ENCODE measurements at regions of chr2 and their contacts with region 1.

Region 1: GRCh38 chr2:172588931-172589330 is 33.0 kb downstream of the PDK1 start:
- DNase-seq: no peak
- ATAC-seq: no peak
- H3K4me3 ChIP-seq: no peak overlapping the region
- H3K4me3 Mint-ChIP-seq: peak overlapping the region in 1 of 10 donors; percentile 2
- H3K27ac ChIP-seq: peak overlapping the region; percentile 7
- H3K27ac Mint-ChIP-seq: peak overlapping the region in 7 of 9 donors; percentile 7 to 76 (median 48)
- H3K4me1 ChIP-seq: peaks cover 5 to 9% of the 10 kb centered on the region in 2 donors
- H3K4me1 Mint-ChIP-seq: peaks cover 27 to 66% (median 57%) of the 10 kb centered on the region in 7 donors
- H3K27me3 ChIP-seq: no peaks in the 10 kb centered on the region
- H3K27me3 Mint-ChIP-seq: no peaks in the 10 kb centered on the region

Region 2: GRCh38 chr2:171297951-171298350 is 1291.0 kb before region 1 on chr2:
- CTCF ChIA-PET with region 1: no interaction called
- POLR2A ChIA-PET with region 1: no interaction called
- intact Hi-C with region 1: no loop called
- DNase-seq: no peak
- ATAC-seq: no peak
- H3K4me3 ChIP-seq: no peak overlapping the region
- H3K4me3 Mint-ChIP-seq: no peak overlapping the region
- H3K27ac ChIP-seq: no peak overlapping the region
- H3K27ac Mint-ChIP-seq: no peak overlapping the region
- H3K4me1 ChIP-seq: no peaks in the 10 kb centered on the region
- H3K4me1 Mint-ChIP-seq: no peaks in the 10 kb centered on the region
- H3K27me3 ChIP-seq: no peaks in the 10 kb centered on the region
- H3K27me3 Mint-ChIP-seq: no peaks in the 10 kb centered on the region

Region 3: GRCh38 chr2:172513935-172514586 is 74.9 kb before region 1 on chr2:
- CTCF ChIA-PET with region 1: no interaction called
- POLR2A ChIA-PET with region 1: no interaction called
- intact Hi-C with region 1: no loop called
- DNase-seq: no peak
- ATAC-seq: peak; percentile 74
- H3K4me3 ChIP-seq: no peak overlapping the region
- H3K4me3 Mint-ChIP-seq: no peak overlapping the region
- H3K27ac ChIP-seq: no peak overlapping the region
- H3K27ac Mint-ChIP-seq: peak overlapping the region in 2 of 9 donors; percentile 22 to 67
- H3K4me1 ChIP-seq: peaks cover 0 to 15% of the 10 kb centered on the region in 2 donors
- H3K4me1 Mint-ChIP-seq: peaks cover 11 to 47% (median 26%) of the 10 kb centered on the region in 7 donors
- H3K27me3 ChIP-seq: no peaks in the 10 kb centered on the region
- H3K27me3 Mint-ChIP-seq: no peaks in the 10 kb centered on the region

Region 4: GRCh38 chr2:172578054-172578453 is 10.9 kb before region 1 on chr2:
- CTCF ChIA-PET with region 1: interaction called, 17 read pairs
- POLR2A ChIA-PET with region 1: interaction called, 3 read pairs
- intact Hi-C with region 1: no loop called
- DNase-seq: no peak
- ATAC-seq: no peak
- H3K4me3 ChIP-seq: no peak overlapping the region
- H3K4me3 Mint-ChIP-seq: peak overlapping the region in 2 of 10 donors; percentile 4 to 28
- H3K27ac ChIP-seq: no peak overlapping the region
- H3K27ac Mint-ChIP-seq: no peak overlapping the region
- H3K4me1 ChIP-seq: peaks cover 0 to 3% of the 10 kb centered on the region in 2 donors
- H3K4me1 Mint-ChIP-seq: peaks cover 14 to 53% (median 45%) of the 10 kb centered on the region in 7 donors
- H3K27me3 ChIP-seq: no peaks in the 10 kb centered on the region
- H3K27me3 Mint-ChIP-seq: no peaks in the 10 kb centered on the region

Region 5: DNA sequence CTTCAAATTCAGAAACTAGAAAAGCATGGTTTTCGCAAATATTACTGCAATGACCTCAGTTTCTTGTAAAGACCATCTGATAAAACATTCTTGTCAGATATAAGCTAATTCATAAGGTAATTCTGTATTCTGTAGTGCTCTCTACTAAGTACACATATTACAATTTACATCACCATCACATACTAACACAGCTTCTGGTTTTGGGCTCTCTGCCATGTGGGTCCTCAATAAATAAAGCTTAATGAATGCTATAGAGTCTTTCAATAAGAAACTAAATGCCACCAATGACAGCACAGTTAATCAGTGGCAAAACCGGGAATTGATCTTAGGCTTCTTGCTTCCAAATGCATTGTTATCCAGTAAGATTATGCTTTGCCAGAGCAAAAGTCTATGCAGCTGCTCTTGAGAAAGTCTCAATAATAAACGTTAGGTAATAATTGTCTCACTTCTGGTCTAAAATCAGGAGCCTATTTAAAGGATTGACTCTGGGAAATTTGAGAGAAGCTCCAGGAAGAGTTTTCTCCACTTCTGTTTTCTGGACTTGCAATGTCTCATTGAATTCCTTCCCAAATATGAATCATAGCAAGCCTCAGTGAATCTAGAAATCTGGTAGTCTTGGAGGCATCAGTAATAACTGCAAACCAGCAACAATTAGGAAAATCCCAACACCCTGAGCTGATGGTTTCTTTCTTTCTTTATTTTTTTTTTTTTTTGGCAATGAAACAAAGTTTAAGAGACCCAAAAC is 78.8 kb after region 1 on chr2:
- CTCF ChIA-PET with region 1: no interaction called
- POLR2A ChIA-PET with region 1: no interaction called
- intact Hi-C with region 1: loop called in 1 of 2 experiments (anchors 2 kb)
- DNase-seq: no peak
- ATAC-seq: no peak
- H3K4me3 ChIP-seq: no peak overlapping the region
- H3K4me3 Mint-ChIP-seq: no peak overlapping the region
- H3K27ac ChIP-seq: no peak overlapping the region
- H3K27ac Mint-ChIP-seq: no peak overlapping the region
- H3K4me1 ChIP-seq: no peaks in the 10 kb centered on the region
- H3K4me1 Mint-ChIP-seq: no peaks in the 10 kb centered on the region
- H3K27me3 ChIP-seq: no peaks in the 10 kb centered on the region
- H3K27me3 Mint-ChIP-seq: peaks cover 0 to under 1% (median 0%) of the 10 kb centered on the region in 5 donors

Measured in naive thymus-derived CD4-positive, alpha-beta T cell (primary cell).